ENCODE measurements at regions of chr13 and their contacts with region 1.

Region 1: GRCh38 chr13:100573121-100573520 is 15.5 kb downstream of the GGACT start:
- DNase-seq: peak; percentile 81
- H3K4me3 Mint-ChIP-seq: no peak overlapping the region
- H3K27ac Mint-ChIP-seq: no peak overlapping the region
- H3K4me1 Mint-ChIP-seq: peaks cover 28% of the 10 kb centered on the region
- H3K27me3 Mint-ChIP-seq: no peaks in the 10 kb centered on the region

Region 2: GRCh38 chr13:100588331-100589177 is 15.4 kb after region 1 on chr13 and contains the start of gene GGACT:
- CTCF ChIA-PET with region 1: interaction called, 11 read pairs
- POLR2A ChIA-PET with region 1: no interaction called
- DNase-seq: peak; percentile 79
- H3K4me3 Mint-ChIP-seq: peak within 1 kb of the TSS; percentile 76
- H3K27ac Mint-ChIP-seq: peak within 1 kb of the TSS; percentile 96
- H3K4me1 Mint-ChIP-seq: peaks cover 66% of the 10 kb centered on the region
- H3K27me3 Mint-ChIP-seq: no peaks in the 10 kb centered on the region
- total RNA-seq, gene GGACT: 4.7 to 9.9 TPM

Region 3: DNA sequence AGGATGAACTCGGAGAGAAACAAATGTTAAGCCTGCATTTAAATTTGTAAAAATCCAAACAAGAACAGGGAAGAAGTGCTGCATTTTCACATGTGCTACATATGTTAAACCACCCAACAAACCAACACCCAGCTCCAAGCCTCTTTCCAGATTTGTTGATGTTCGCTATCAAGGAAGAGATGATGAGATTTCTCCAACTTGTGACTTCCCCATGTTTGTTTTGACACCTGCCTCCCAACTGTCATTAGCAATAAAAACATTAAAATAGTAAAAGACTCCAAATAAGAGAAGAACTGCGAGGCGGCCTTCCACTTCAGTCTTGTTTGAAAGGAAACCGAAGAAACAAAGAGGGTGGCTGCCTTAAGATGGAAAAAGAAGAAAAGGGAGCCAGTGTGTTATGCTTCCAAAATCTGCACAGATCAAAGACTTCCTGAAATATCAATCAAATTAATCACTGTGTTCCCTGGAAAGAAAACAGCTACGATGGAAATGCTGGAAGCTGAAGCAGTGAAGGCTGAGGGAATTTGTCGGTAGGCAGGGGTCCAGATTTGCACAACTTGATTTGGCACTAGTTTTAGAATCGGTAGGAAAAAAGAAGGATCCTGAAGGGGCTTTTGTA is 29.5 kb after region 1 on chr13:
- CTCF ChIA-PET with region 1: no interaction called
- POLR2A ChIA-PET with region 1: no interaction called
- DNase-seq: no peak
- H3K4me3 Mint-ChIP-seq: no peak overlapping the region
- H3K27ac Mint-ChIP-seq: no peak overlapping the region
- H3K4me1 Mint-ChIP-seq: no peaks in the 10 kb centered on the region
- H3K27me3 Mint-ChIP-seq: no peaks in the 10 kb centered on the region

Measured in activated CD4-positive, alpha-beta T cell treated with anti-CD3 and anti-CD28 coated beads, Interleukin-2, amount 10 ng/mL, durations not matched to agents 7 days and 5 days (primary cell).